ENCODE measurements at regions of chr2 and their contacts with region 1.

Region 1: GRCh38 chr2:200476836-200477235 is 33.0 kb downstream of the KCTD18 start:
- DNase-seq: no peak
- H3K4me3 ChIP-seq: no peak overlapping the region
- H3K27ac ChIP-seq: no peak overlapping the region
- H3K4me1 ChIP-seq: peaks cover 1 to 18% of the 10 kb centered on the region in 2 experiments; a peak in 3 of 4 replicates
- H3K27me3 ChIP-seq: no peaks in the 10 kb centered on the region
- CTCF ChIP-seq: no peak
- EP300 ChIP-seq: no peak
- RAD21 ChIP-seq: no peak

Region 2: DNA sequence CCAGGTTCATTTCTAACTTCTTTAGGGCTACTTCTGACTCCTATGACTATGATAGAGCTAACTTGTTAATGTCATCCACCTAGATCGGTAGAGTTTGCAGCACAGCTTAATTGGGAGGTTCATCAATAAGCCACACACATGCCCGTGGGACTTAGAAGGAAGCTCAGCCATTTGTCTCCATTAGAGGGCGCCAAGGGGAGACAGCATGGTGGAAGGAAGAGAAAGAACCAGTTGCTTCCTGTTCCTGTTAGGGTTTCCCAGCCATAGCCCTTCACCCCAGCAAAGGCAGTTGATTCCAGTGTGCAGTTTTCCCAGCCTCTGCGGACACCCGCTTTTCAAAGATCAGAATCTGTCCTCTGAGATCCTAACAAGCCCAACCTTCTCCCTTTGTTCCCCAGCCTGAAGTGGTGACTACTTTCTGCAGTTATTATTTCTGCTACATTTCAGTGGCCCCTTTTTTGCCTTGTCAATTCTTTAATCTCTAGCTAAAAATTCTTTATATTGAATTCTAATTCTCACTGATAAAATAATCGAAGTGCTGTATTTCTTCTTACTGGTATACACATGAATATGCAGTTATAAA is 491.1 kb before region 1 on chr2:
- CTCF ChIA-PET with region 1: interaction called, 57 read pairs
- POLR2A ChIA-PET with region 1: interaction called, 3 read pairs
- DNase-seq: peak; percentile 38
- H3K4me3 ChIP-seq: peak overlapping the region in 1 of 2 experiments; percentile 24; a peak in 1 of 4 replicates
- H3K27ac ChIP-seq: no peak overlapping the region
- H3K4me1 ChIP-seq: no peaks in the 10 kb centered on the region; a peak in 2 of 4 replicates
- H3K27me3 ChIP-seq: no peaks in the 10 kb centered on the region
- CTCF ChIP-seq: peak; percentile 67
- EP300 ChIP-seq: no peak
- RAD21 ChIP-seq: peak; percentile 74

Region 3: DNA sequence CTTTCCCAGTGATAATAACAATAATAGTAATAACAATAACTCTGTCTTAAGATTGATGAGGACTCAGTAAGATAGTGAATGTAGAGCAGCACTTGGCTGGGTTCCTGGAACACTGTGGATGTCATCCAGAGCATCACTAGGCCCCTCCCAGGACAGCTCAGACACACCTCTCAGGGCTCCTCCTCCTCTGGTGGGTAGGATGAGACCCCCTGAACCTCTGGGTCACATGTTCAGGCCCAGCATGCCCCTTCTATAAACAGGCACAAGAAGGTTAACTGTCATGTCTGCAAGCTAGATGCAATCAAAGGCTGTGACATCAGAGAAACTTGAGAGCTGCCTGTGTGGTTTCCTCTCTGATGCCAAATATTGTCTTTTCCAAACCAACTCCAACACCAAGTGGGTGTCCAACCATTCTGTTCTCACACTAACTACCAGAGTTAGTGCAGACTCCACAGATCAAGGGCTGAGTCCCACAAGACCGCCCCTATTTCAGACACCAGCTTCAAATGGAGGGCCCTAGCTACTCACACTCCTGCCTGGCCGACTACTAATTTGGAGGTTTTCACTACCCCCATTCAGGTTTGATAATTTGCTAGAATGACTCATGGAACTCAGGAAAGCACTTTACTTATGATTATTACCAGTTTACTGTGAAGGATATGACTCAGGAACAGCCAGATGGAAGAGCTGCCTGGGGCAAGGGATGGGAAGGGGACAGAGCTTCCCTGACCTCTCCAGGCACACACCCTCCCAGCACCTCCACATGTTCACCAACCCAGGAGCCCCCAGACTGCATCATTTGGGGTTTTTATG is 288.5 kb after region 1 on chr2:
- CTCF ChIA-PET with region 1: no interaction called
- POLR2A ChIA-PET with region 1: no interaction called
- DNase-seq: no peak
- H3K4me3 ChIP-seq: no peak overlapping the region
- H3K27ac ChIP-seq: peak overlapping the region; percentile 19 to 95; a peak in 3 of 4 replicates
- H3K4me1 ChIP-seq: peaks cover 0 to 38% of the 10 kb centered on the region in 2 experiments; a peak in 3 of 4 replicates
- H3K27me3 ChIP-seq: no peaks in the 10 kb centered on the region
- CTCF ChIP-seq: no peak
- EP300 ChIP-seq: peak in 1 of 2 experiments; percentile 82; a peak in 2 of 4 replicates
- RAD21 ChIP-seq: no peak

Region 4: DNA sequence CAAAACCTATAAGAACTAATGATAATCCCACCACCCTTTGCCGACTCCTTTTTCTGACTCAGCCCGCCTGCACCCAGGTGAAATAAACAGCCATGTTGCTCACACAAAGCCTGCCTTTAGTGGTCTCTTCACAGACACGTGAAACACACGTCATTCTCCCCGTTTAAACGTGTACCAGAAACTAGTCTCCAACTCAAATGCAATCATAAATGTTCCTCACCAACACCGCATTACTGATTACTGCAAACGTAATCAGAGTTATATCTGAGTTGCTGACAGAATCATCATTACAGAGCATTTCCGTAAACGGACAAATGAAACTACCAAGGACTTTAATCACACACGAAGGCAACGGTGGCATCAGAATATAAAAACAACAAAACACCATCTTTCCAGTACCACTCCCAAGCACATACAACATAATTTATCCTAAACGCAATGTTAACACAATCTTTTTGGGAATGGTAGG is 385.7 kb after region 1 on chr2:
- CTCF ChIA-PET with region 1: no interaction called
- POLR2A ChIA-PET with region 1: no interaction called
- DNase-seq: peak; percentile 33
- H3K4me3 ChIP-seq: peak overlapping the region; percentile 94 to 96
- H3K27ac ChIP-seq: peak overlapping the region; percentile 53 to 97; a peak in 3 of 4 replicates
- H3K4me1 ChIP-seq: peaks cover 20 to 27% of the 10 kb centered on the region in 2 experiments; a peak in 3 of 4 replicates
- H3K27me3 ChIP-seq: no peaks in the 10 kb centered on the region
- CTCF ChIP-seq: no peak
- EP300 ChIP-seq: no peak
- RAD21 ChIP-seq: no peak

Region 5: DNA sequence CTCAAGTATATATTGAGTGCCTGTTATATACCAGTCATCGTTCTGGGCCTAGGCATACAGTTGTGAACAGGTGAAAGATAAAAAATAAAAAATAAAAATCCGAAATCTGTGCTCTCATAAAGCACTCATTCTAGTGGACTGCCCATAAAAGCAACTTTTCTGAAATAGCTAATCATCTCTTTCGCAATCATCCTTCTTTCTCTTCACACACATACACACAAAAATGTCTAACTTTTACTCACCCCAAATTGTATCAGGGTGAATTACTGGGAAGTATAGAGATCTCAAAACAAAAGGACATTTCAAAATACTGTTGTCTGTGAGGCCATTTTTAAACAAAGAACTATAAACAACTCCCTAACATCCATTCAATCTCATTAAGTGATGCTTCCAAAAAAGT is 516.3 kb after region 1 on chr2:
- CTCF ChIA-PET with region 1: no interaction called
- POLR2A ChIA-PET with region 1: no interaction called
- DNase-seq: no peak
- H3K4me3 ChIP-seq: no peak overlapping the region
- H3K27ac ChIP-seq: no peak overlapping the region
- H3K4me1 ChIP-seq: no peaks in the 10 kb centered on the region
- H3K27me3 ChIP-seq: no peaks in the 10 kb centered on the region
- CTCF ChIP-seq: no peak
- EP300 ChIP-seq: no peak
- RAD21 ChIP-seq: no peak